ENCODE measurements at regions of chr12 and their contacts with region 1.

Region 1: GRCh38 chr12:1078002-1078401 is 87.0 kb downstream of the ERC1 start:
- DNase-seq: no peak
- ATAC-seq: no peak
- H3K4me3 ChIP-seq: no peak overlapping the region
- H3K27ac ChIP-seq: no peak overlapping the region
- H3K4me1 ChIP-seq: no peaks in the 10 kb centered on the region
- CTCF ChIP-seq: no peak
- EP300 ChIP-seq: no peak
- POLR2A ChIP-seq: no peak
- RAD21 ChIP-seq: no peak

Region 2: GRCh38 chr12:1093166-1093751 is 15.3 kb after region 1 on chr12:
- CTCF ChIA-PET with region 1: interaction called, 47 read pairs
- POLR2A ChIA-PET with region 1: interaction called, 5 read pairs
- DNase-seq: peak; percentile 20 to 75
- ATAC-seq: peak; percentile 87 to 92
- H3K4me3 ChIP-seq: no peak overlapping the region
- H3K27ac ChIP-seq: no peak overlapping the region
- H3K4me1 ChIP-seq: no peaks in the 10 kb centered on the region
- CTCF ChIP-seq: peak; percentile 64
- EP300 ChIP-seq: no peak
- POLR2A ChIP-seq: no peak
- RAD21 ChIP-seq: peak; percentile 64 to 74

Region 3: GRCh38 chr12:1328391-1328790 is 250.4 kb after region 1 on chr12:
- CTCF ChIA-PET with region 1: no interaction called
- POLR2A ChIA-PET with region 1: no interaction called
- DNase-seq: no peak
- ATAC-seq: no peak
- H3K4me3 ChIP-seq: no peak overlapping the region
- H3K27ac ChIP-seq: no peak overlapping the region
- H3K4me1 ChIP-seq: peaks cover 8% of the 10 kb centered on the region; the same call in 1 of the 3 replicates
- CTCF ChIP-seq: no peak
- EP300 ChIP-seq: no peak
- POLR2A ChIP-seq: no peak
- RAD21 ChIP-seq: no peak

Measured in A549 (cell line).